Heart left ventricle (tissue), 16 donors: ENCODE measurements at regions of chr1 and their contacts with region 1.

Region 1: DNA sequence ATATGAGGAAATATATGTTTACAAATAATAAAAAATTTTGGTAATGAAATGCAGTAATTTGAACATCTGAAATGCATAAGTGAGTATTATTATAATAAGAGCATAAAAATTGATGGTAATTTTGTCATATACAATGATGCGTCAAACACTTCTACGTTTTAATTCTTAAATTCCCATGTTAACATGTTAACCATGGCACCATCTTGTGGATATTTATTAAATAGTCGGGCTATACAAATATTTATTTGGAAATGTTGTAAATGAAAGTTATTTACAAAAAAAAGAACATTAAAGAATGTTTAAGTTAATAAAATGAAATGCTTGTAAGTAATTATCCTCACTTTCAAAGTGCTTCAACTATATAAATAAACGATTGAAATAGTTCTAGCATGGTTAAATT is 57.2 kb upstream of the C1orf185 start:
- DNase-seq: no peak
- ATAC-seq: no peak
- H3K4me3 ChIP-seq: no peak overlapping the region
- H3K27ac ChIP-seq: no peak overlapping the region
- H3K4me1 ChIP-seq: no peaks in the 10 kb centered on the region
- H3K27me3 ChIP-seq: peaks cover 0 to 7% (median 0%) of the 10 kb centered on the region in 9 donors
- CTCF ChIP-seq: peak in 10 of 12 donors; percentile 34 to 59 (median 52)
- POLR2A ChIP-seq: no peak

Region 2: GRCh38 chr1:50697440-50698421 is 347.1 kb before region 1 on chr1:
- intact Hi-C with region 1: no loop called
- DNase-seq: no peak
- ATAC-seq: no peak
- H3K4me3 ChIP-seq: no peak overlapping the region
- H3K27ac ChIP-seq: no peak overlapping the region
- H3K4me1 ChIP-seq: peaks cover 0 to 21% (median 3%) of the 10 kb centered on the region in 12 donors
- H3K27me3 ChIP-seq: no peaks in the 10 kb centered on the region
- CTCF ChIP-seq: no peak
- POLR2A ChIP-seq: no peak

Region 3: DNA sequence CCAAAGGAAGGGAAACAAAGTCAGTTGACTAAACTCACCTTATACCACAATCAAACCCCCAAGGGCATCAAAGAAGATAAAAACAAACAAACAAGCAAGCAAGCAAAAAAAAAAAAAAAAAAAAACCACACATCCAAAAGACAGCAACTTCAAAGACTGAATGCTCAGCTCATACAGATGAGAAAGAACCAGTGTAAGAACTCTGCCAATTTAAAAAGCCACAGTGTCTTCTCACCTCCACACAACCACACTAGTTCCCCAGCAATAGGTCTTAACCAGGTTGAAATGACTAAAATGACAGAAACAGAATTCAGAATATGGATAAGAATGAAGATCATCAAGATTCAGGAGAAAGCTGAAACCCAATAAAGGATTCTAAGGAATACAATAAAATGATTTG is 278.1 kb before region 1 on chr1:
- intact Hi-C with region 1: loop called in 3 of 10 experiments (anchors 2 to 5 kb)
- DNase-seq: no peak
- ATAC-seq: no peak
- H3K4me3 ChIP-seq: no peak overlapping the region
- H3K27ac ChIP-seq: no peak overlapping the region
- H3K4me1 ChIP-seq: peaks cover 0 to 10% (median 0%) of the 10 kb centered on the region in 12 donors
- H3K27me3 ChIP-seq: no peaks in the 10 kb centered on the region
- CTCF ChIP-seq: no peak
- POLR2A ChIP-seq: no peak

Region 4: GRCh38 chr1:50929376-50929958 is 115.4 kb before region 1 on chr1:
- intact Hi-C with region 1: loop called in 8 of 10 experiments (anchors 2 to 10 kb)
- DNase-seq: no peak
- ATAC-seq: no peak
- H3K4me3 ChIP-seq: no peak overlapping the region
- H3K27ac ChIP-seq: no peak overlapping the region
- H3K4me1 ChIP-seq: peaks cover 0 to 14% (median 1%) of the 10 kb centered on the region in 12 donors
- H3K27me3 ChIP-seq: no peaks in the 10 kb centered on the region
- CTCF ChIP-seq: peak; percentile 39 to 71 (median 53)
- POLR2A ChIP-seq: no peak

Region 5: GRCh38 chr1:50949286-50949982 is 95.4 kb before region 1 on chr1:
- intact Hi-C with region 1: loop called in 1 of 10 experiments (anchors 10 kb)
- DNase-seq: no peak
- ATAC-seq: no peak
- H3K4me3 ChIP-seq: no peak overlapping the region
- H3K27ac ChIP-seq: no peak overlapping the region
- H3K4me1 ChIP-seq: peaks cover 0 to 36% (median 12%) of the 10 kb centered on the region in 12 donors
- H3K27me3 ChIP-seq: no peaks in the 10 kb centered on the region
- CTCF ChIP-seq: no peak
- POLR2A ChIP-seq: no peak

Region 6: DNA sequence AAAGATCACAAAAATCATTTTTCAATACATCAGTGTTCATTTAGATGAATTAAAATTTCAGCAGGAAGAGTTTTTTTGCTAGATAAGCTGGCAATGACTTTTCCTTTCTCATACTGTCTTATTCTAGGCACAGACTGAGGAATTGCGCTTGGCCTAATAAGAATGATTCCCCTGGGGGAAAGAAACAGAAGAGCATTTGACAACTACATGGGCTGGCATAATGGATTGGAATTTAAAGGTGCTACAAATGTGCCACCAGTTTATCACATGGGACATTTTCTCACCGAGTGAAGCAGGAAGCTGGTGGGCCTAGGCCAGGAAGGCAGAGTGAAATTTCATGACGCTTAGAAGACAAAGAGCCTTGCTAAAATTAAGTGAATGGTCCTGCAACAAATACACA is 35.5 kb before region 1 on chr1:
- intact Hi-C with region 1: no loop called
- DNase-seq: no peak
- ATAC-seq: no peak
- H3K4me3 ChIP-seq: no peak overlapping the region
- H3K27ac ChIP-seq: no peak overlapping the region
- H3K4me1 ChIP-seq: no peaks in the 10 kb centered on the region
- H3K27me3 ChIP-seq: no peaks in the 10 kb centered on the region
- CTCF ChIP-seq: no peak
- POLR2A ChIP-seq: no peak